ENCODE measurements at regions of chr15 and their contacts with region 1.

Region 1: DNA sequence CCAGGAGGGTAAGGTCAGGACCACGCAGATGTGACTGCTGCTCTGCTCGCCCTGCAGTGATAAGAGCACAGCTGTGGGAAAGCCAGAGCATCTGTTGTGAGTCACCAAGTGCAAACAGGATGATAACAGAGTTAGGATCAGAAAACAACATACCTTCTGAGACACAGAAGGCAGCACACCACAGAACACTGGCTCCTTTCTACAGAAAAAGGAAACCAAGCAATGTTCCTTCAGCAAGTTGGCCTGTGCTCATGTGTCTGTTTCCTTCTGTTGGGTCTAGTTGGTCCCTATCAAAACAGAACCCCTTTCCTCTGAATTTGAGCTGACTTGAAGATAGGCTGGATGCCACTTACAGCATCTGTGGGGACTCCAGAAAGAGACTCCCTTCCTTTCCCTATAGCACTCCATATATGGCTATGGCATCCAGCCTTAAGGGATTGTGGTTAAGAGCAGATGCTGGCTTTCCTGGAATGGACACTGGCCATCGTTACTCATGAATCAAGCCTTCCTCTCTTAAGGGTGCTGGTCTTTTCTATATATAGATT is 440.7 kb upstream of the THBS1 start:
- DNase-seq: peak; percentile 11
- H3K4me3 Mint-ChIP-seq: no peak overlapping the region
- H3K27ac Mint-ChIP-seq: no peak overlapping the region
- H3K4me1 Mint-ChIP-seq: peaks cover 34% of the 10 kb centered on the region
- H3K27me3 Mint-ChIP-seq: peaks cover 4% of the 10 kb centered on the region

Region 2: DNA sequence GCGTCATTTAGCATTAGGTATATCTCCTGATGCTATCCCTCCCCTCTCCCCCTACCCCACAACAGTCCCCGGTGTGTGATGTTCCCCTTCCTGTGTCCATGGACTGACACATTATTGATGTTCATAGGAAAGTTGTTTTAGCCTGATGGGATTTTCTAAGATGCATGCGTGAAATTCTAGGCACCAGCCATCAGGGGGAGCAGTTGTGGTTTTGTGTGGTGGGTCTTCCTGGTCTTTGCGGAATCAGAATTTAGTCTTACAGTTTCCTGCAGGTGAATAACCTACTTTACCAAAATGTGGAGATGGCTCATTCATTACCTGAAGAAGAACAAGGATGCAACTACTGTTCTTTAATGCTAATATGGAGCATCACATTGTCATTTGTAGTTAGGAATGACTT is 14.2 kb before region 1 on chr15:
- intact Hi-C with region 1: loop called (anchors 2 kb)
- DNase-seq: peak; percentile 15
- H3K4me3 Mint-ChIP-seq: no peak overlapping the region
- H3K27ac Mint-ChIP-seq: no peak overlapping the region
- H3K4me1 Mint-ChIP-seq: peaks cover 20% of the 10 kb centered on the region
- H3K27me3 Mint-ChIP-seq: peaks cover 11% of the 10 kb centered on the region

Region 3: DNA sequence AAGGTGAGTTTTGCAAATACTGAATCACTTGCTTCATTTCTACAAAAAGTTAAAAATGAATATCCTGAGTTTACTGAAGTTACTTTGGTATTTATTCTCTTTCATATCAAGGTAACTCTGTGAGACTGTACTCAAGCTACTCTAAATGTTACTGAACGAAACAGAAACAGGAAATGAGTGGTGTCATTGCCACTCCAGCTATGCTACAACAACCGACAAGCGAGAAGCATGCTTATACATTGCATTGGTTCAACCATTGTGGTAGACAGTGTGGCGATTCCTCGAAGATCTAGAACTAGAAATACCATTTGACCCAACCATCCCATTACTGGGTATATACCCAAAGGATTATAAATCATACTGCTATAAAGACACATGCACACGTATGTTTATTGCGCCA is 127.6 kb after region 1 on chr15:
- intact Hi-C with region 1: loop called (anchors 10 kb)
- DNase-seq: no peak
- H3K4me3 Mint-ChIP-seq: no peak overlapping the region
- H3K27ac Mint-ChIP-seq: no peak overlapping the region
- H3K4me1 Mint-ChIP-seq: peaks cover 9% of the 10 kb centered on the region
- H3K27me3 Mint-ChIP-seq: peaks cover 8% of the 10 kb centered on the region

Region 4: DNA sequence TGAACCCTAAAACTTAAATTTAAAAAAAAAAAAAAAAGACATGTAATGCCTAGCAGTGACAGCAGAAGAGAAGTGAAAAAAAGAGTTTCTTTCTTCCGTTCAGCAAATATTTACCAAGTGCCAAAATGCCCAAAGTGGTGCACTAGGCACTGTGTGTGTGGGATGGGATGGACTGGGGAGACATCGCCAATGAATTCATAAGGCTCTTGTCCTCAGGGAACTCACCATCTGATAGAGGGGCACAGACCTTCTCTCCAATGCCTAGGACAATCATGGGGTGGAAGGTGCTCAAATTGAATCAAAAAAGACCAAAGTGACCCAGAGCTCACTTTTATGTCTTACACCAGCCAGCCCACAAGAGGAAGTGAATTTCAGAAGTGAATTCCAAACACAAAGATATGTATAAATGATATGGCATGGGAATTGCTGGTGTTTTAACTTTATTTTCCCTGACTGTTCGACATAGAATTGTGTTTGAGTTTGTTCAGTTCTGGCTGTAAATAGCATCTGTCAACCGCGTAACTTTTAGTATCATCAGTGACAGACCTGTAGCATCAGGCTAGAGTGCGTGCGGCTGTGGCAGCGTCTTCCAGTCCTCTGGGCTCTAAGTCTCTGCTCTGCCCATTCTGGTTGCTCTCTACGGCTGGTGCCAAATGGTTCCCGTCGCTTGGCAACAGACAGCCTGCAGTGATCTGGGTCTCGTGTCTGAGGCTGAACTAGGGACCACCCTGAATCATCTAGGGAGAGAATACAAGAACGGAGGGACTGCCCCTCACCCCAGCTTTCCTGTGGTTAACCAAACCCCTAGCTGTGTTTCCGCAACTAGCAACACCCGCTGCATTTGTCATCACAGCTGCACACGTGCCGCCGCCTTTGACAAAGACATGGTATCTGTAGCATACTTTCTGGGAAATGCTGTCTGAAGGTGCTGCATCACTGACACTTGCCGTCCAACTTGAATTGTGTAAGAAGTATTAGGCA is 286.7 kb after region 1 on chr15:
- intact Hi-C with region 1: loop called (anchors 5 kb)
- DNase-seq: peak; percentile 68
- H3K4me3 Mint-ChIP-seq: peak overlapping the region; percentile 22
- H3K27ac Mint-ChIP-seq: no peak overlapping the region
- H3K4me1 Mint-ChIP-seq: peaks cover 26% of the 10 kb centered on the region
- H3K27me3 Mint-ChIP-seq: peaks cover 33% of the 10 kb centered on the region

Region 5: DNA sequence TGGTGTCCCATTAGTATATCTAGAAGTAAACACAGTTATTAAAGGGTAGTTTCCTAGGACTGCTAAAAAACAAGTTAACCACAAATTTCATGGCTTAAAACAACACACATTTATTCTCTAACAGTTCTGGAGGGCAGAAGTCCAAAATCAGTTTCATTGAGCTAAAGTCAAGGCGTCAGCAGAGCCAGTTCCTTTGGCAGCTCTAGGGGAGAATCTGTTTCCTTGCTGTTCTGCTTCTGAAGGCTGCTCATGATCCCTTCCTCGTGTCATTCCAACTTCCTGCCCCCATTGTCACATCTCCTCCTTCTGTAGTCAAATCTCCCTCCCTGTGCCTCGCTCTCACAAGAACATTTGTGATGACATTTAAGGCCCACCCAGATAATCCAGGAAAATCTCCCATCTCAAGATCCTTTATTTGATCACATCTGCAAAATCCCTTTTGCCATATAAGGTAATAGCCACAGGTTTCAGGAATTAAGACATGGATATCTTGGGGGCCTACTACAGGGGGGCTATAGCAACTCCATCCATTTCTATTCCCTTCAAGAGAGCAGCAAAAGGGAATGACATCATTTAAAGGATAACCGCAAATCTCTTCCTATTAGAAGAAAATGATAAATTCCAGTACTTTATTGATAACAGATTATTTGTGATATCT is 729.9 kb after region 1 on chr15:
- intact Hi-C with region 1: no loop called
- DNase-seq: no peak
- H3K4me3 Mint-ChIP-seq: no peak overlapping the region
- H3K27ac Mint-ChIP-seq: no peak overlapping the region
- H3K4me1 Mint-ChIP-seq: peaks cover 12% of the 10 kb centered on the region
- H3K27me3 Mint-ChIP-seq: peaks cover 29% of the 10 kb centered on the region